ENCODE measurements at regions of chr6 and their contacts with region 1.

Region 1: GRCh38 chr6:106997390-106998158 is 23.0 kb upstream of the CD24 start:
- DNase-seq: peak; percentile 68
- H3K4me3 Mint-ChIP-seq: no peak overlapping the region
- H3K27ac Mint-ChIP-seq: no peak overlapping the region
- H3K4me1 Mint-ChIP-seq: peaks cover 4% of the 10 kb centered on the region
- H3K27me3 Mint-ChIP-seq: peaks cover 9% of the 10 kb centered on the region

Region 2: GRCh38 chr6:106586815-106587415 is 410.7 kb before region 1 on chr6:
- CTCF ChIA-PET with region 1: interaction called, 10 read pairs
- DNase-seq: no peak
- H3K4me3 Mint-ChIP-seq: no peak overlapping the region
- H3K27ac Mint-ChIP-seq: no peak overlapping the region
- H3K4me1 Mint-ChIP-seq: no peaks in the 10 kb centered on the region
- H3K27me3 Mint-ChIP-seq: no peaks in the 10 kb centered on the region

Measured in activated naive CD4-positive, alpha-beta T cell treated with anti-CD3 and anti-CD28 coated beads, Interleukin-2, amount 10 ng/mL, durations not matched to agents 7 days and 5 days (primary cell).